K562 (cell line): ENCODE measurements at regions of chr14 and their contacts with region 1.

Region 1: DNA sequence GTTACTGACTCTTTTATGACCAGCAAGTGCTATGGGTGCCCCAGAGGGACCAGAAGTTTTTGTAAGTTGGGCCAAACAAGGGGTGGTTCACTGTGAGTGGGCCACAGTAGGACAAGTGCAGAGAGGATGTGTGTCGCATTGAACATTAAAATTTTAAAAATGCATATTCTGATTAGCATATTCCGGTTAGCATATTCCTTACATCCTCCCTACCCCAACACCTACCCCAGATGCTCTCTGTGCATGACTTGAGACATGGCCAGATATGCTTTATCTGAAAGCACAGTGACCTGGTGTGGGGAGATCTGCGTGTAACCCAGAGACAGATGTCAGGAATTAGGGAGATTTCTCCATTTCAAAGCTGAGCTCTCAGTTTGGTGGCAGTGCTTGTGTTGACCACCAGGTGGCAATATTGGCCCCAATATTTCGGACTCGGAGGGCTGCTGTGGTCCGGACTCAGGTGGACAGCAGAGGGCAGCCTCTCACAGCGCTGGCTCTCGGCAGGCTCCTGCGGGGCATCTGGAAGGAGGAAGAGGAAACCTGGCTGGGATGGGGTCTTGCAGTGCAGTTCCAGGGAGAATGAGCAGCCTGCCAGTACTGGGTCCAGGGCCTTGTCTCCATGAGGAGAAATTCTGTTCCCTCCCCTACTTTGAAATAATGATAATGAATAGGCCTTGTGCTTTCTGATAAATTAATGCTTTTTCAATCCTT is 1.6 kb upstream of the CEBPE start:
- DNase-seq: peak; percentile 87 to 94 (median 88)
- ATAC-seq: peak; percentile 92
- H3K4me3 ChIP-seq: no peak overlapping the region
- H3K27ac ChIP-seq: no peak overlapping the region
- H3K4me1 ChIP-seq: peaks cover 51 to 58% of the 10 kb centered on the region in 2 experiments
- H3K27me3 ChIP-seq: no peaks in the 10 kb centered on the region
- CTCF ChIP-seq: peak; percentile 100
- EP300 ChIP-seq: peak; percentile 71
- POLR2A ChIP-seq: no peak
- RAD21 ChIP-seq: peak; percentile 100

Region 2: DNA sequence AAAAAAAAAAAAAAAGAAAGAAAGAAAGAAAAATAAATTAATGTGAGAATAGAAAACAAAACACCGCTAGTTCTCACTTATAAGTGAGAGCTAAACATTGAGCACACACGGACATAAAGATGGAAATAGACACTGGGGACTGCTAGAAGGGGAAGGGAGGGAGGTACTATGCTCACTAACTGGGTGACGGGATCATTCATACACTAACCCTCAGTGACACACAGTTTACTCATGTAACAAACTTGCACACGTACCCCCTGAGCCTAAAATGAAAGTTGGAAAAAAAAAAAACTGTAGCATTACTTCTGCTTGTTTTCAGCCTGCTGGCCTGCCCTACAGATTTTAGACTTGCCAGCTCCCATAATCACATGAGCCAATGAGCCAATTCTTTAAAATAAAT is 181.0 kb before region 1 on chr14:
- CTCF ChIA-PET with region 1: no interaction called
- POLR2A ChIA-PET with region 1: no interaction called
- in situ Hi-C with region 1: no loop called
- intact Hi-C with region 1: no loop called
- DNase-seq: no peak
- ATAC-seq: no peak
- H3K4me3 ChIP-seq: no peak overlapping the region
- H3K27ac ChIP-seq: no peak overlapping the region
- H3K4me1 ChIP-seq: no peaks in the 10 kb centered on the region; a peak in 1 of 5 replicates
- H3K27me3 ChIP-seq: no peaks in the 10 kb centered on the region
- CTCF ChIP-seq: no peak
- EP300 ChIP-seq: no peak
- POLR2A ChIP-seq: no peak
- RAD21 ChIP-seq: no peak

Region 3: GRCh38 chr14:23147676-23148075 is 27.0 kb after region 1 on chr14:
- CTCF ChIA-PET with region 1: no interaction called
- POLR2A ChIA-PET with region 1: interaction called, 3 read pairs
- in situ Hi-C with region 1: no loop called
- intact Hi-C with region 1: loop called (anchors 2 kb)
- DNase-seq: peak in 1 of 4 experiments; percentile 73
- ATAC-seq: no peak
- H3K4me3 ChIP-seq: no peak overlapping the region
- H3K27ac ChIP-seq: no peak overlapping the region
- H3K4me1 ChIP-seq: peaks cover 37 to 51% of the 10 kb centered on the region in 2 experiments; a peak in 4 of 5 replicates
- H3K27me3 ChIP-seq: no peaks in the 10 kb centered on the region
- CTCF ChIP-seq: no peak
- EP300 ChIP-seq: no peak
- POLR2A ChIP-seq: no peak
- RAD21 ChIP-seq: no peak

Region 4: DNA sequence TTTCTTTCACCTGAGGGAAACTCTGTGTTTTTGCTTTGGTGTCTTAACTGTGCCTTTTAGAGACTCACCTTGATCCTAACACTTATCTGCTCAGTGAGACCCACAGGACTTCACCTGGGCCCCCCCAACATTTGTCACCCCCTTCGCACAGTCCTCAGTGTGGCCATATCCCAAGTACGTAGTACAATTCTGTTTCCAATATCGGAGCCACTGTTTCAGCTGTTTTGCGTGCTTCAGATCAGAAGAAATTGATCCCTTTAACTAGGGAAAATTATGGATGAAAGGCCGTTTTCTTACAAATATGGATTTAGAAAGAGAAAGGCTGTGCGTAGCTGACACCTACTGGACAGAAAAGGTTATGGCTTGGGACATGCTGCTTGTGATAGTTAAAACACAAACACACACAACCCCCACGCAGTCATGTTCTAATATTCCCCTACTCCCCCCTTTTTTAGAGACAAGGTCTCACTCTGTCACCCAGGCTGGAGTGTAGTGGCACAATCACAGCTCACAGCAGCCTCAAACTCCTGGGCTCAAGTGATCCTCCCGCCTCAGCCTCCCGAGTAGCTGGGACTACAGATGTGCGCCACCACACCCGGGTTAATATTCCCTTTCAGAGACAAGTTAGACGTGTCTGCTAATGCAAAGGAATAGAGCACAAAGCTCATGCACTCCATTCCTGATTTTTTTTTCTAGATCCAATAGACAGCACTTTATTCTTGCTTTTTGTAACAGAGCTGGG is 66.4 kb after region 1 on chr14:
- CTCF ChIA-PET with region 1: interaction called, 310 read pairs
- POLR2A ChIA-PET with region 1: interaction called, 8 read pairs
- in situ Hi-C with region 1: loop called (anchors 5 kb)
- intact Hi-C with region 1: loop called (anchors 1 kb)
- DNase-seq: peak; percentile 68 to 81 (median 70)
- ATAC-seq: peak; percentile 89
- H3K4me3 ChIP-seq: no peak overlapping the region
- H3K27ac ChIP-seq: no peak overlapping the region; the same call in 2 of the 3 replicates
- H3K4me1 ChIP-seq: peaks cover 11 to 12% of the 10 kb centered on the region in 2 experiments; a peak in 4 of 5 replicates
- H3K27me3 ChIP-seq: no peaks in the 10 kb centered on the region
- CTCF ChIP-seq: peak; percentile 87 to 97 (median 93)
- EP300 ChIP-seq: no peak
- POLR2A ChIP-seq: no peak
- RAD21 ChIP-seq: peak; percentile 99 to 100

Region 5: GRCh38 chr14:23294734-23295561 is 174.3 kb after region 1 on chr14:
- CTCF ChIA-PET with region 1: interaction called, 57 read pairs
- POLR2A ChIA-PET with region 1: no interaction called
- in situ Hi-C with region 1: no loop called
- intact Hi-C with region 1: loop called (anchors 5 kb)
- DNase-seq: peak; percentile 21 to 84 (median 35)
- ATAC-seq: peak; percentile 88
- H3K4me3 ChIP-seq: no peak overlapping the region
- H3K27ac ChIP-seq: peak overlapping the region; percentile 31; the same call in 2 of the 3 replicates
- H3K4me1 ChIP-seq: peaks cover 10 to 19% of the 10 kb centered on the region in 2 experiments
- H3K27me3 ChIP-seq: no peaks in the 10 kb centered on the region
- CTCF ChIP-seq: peak; percentile 81 to 88 (median 85)
- EP300 ChIP-seq: peak; percentile 73; the same call in 1 of the 2 replicates
- POLR2A ChIP-seq: no peak; the same call in 1 of the 2 replicates
- RAD21 ChIP-seq: peak in 1 of 2 experiments; percentile 48; a peak in 3 of 4 replicates

Region 6: DNA sequence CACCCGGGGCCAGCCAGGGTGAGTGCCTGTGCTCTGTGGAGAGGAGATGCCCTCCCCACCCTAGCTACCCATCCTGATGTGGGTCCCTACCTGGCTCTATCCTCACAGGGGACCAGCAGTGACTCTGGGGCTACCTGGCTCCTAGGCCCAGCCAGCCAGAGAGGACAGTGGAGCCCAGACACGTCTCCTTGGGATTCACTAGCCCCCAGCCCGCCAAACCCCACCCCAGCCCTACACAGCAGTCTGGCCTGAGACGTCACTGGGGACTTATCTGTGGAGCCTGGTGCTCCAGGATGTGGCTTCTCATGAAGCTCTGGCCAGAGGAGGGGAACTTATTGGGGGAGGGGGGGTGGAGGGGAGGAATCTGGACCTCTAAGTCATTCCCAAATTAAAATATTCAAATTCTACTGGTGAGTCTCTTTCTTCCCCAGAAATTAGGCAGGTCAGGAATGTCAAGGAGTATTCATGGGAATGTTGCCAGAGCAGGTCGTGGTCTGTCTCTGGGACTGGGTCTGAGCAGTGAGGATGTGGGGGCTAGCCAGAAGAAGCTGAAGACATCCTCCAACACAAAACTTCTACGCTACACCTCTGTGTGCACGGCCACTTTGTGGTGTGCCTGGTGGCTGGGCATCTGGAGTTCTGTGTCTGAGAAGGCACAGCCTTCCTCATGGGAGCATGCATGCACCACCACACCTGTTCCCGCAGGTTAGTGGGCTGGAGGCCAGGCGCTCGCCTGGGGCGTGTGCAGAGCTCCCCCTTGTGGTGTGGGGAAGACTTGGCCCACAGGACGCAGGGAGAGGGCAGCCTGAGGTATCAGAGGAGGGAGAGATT is 258.9 kb after region 1 on chr14:
- CTCF ChIA-PET with region 1: interaction called, 19 read pairs
- POLR2A ChIA-PET with region 1: interaction called, 3 read pairs
- in situ Hi-C with region 1: no loop called
- intact Hi-C with region 1: no loop called
- DNase-seq: peak; percentile 63 to 79 (median 72)
- ATAC-seq: peak; percentile 92
- H3K4me3 ChIP-seq: no peak overlapping the region
- H3K27ac ChIP-seq: no peak overlapping the region
- H3K4me1 ChIP-seq: peaks cover 0 to 19% of the 10 kb centered on the region in 2 experiments; a peak in 2 of 5 replicates
- H3K27me3 ChIP-seq: peaks cover 2 to 61% of the 10 kb centered on the region in 2 experiments; a peak in 4 of 5 replicates
- CTCF ChIP-seq: peak; percentile 86 to 93 (median 89)
- EP300 ChIP-seq: no peak
- POLR2A ChIP-seq: no peak
- RAD21 ChIP-seq: peak; percentile 84 to 94